ENCODE measurements at regions of chr20 and their contacts with region 1.

Region 1: DNA sequence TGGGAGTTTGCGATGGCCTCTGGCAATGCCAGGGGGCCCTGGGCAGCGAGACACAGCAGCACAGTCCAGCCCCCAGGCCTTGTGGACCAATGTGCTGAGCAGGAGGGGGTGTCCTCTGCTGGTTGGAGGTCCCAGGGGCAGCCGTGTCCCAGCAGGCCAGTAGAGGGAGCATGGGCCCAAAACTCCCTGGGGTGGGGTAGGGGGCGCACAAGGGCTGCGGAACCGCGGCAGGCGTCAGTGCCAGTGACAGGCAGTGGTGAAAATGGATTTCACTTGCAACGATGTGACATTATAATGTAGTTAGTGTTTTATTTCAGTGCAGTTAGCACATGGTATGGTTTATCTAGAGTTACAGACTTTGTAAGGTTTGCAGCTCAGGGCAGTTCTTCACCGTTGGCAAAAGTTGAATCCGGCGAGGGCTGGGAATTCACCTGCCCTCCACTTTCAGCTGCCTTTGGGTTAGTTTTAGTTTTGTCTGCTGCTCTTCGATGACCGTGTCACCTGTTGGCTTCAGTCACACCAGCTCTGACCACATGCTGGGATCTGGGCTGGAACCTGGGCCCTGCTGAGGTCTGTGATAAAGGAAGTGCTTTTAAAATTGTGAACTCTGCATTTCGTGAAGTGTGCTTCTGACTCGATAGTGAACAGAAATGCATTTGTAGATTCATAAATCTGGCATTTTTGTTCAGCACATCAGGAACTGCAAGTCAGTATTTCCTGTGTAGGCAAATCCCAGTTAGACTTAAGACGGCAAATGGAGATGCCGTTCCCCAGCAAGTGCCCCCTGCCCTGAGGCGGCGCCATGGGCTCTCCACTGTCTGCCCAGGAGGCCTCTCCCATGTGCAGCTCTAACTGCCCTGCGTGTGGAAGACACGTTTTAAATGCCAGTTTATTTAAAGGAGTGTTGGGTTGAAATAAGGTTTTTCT is 46.8 kb downstream of the PYGB start:
- DNase-seq: peak; percentile 44 to 82
- H3K4me3 ChIP-seq: no peak overlapping the region
- H3K27ac ChIP-seq: peak overlapping the region; percentile 8 to 79 (median 67)
- H3K4me1 ChIP-seq: peaks cover 17 to 36% (median 36%) of the 10 kb centered on the region in 4 donors
- H3K27me3 ChIP-seq: no peaks in the 10 kb centered on the region
- CTCF ChIP-seq: peak in 5 of 7 experiments; percentile 25 to 70 (median 62)
- EP300 ChIP-seq: no peak
- POLR2A ChIP-seq: no peak

Region 2: GRCh38 chr20:25399037-25399430 is 104.3 kb after region 1 on chr20:
- intact Hi-C with region 1: loop called (anchors 5 kb)
- DNase-seq: peak; percentile 45 to 83
- H3K4me3 ChIP-seq: no peak overlapping the region
- H3K27ac ChIP-seq: no peak overlapping the region
- H3K4me1 ChIP-seq: peaks cover 0 to 18% (median 0%) of the 10 kb centered on the region in 4 donors
- H3K27me3 ChIP-seq: peaks cover 0 to 3% (median 0%) of the 10 kb centered on the region in 3 donors
- CTCF ChIP-seq: peak in 4 of 7 experiments; percentile 34 to 62 (median 46)
- EP300 ChIP-seq: no peak
- POLR2A ChIP-seq: no peak